Activated naive CD4-positive, alpha-beta T cell treated with anti-CD3 and anti-CD28 coated beads for 36 hours (primary cell): ENCODE measurements at regions of chrX and their contacts with region 1.

Region 1: DNA sequence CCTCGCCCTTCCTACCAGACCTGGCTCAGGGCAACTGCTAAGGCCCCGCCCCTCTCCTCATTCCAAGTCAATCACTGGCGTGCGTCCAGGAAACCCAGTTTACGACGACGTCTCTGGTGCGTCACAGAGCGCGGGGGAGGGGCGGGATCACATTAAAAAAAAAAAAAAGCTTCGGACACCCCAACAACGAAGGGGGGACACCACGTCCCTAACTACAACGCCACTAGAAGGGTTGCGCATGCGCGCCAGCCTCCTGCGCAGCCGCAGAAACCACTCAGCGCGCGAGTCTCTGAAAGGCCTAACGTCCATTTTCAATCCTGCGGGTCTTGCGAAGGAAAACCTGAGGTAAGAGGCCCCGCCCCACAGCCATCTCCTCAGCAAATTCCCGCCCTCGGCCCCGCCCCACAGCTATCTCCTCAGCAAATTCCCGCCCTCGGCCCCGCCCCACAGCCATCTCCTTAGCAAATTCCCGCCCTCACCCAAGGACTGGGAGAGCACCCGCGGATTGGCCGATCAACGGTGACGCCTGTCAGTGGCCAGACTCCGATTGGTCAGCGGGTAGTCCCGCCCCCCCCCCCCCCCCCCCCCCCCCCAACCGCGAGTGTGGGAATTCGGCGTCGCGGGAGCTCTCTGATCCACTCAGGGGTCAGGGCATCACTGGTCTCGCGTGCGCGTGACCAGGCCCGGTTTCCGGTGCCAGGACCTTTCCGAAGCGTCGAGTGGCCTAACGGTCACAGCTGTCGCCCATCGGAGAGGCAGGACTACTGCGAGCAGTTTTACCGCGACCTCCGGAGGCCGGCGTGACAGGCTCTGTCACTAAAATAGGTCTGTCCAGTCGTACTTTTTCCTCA is at the start of gene SCML1:
- DNase-seq: peak; percentile 95
- H3K4me3 Mint-ChIP-seq: peak within 1 kb of the TSS; percentile 84
- H3K27ac Mint-ChIP-seq: peak within 1 kb of the TSS; percentile 88
- H3K4me1 Mint-ChIP-seq: peaks cover 26% of the 10 kb centered on the region
- H3K27me3 Mint-ChIP-seq: no peaks in the 10 kb centered on the region
- total RNA-seq, gene SCML1: 11.4 to 11.8 TPM

Region 2: GRCh38 chrX:16484350-16484749 is 1252.7 kb before region 1 on chrX:
- CTCF ChIA-PET with region 1: no interaction called
- intact Hi-C with region 1: loop called (anchors 5 kb)
- DNase-seq: peak; percentile 66
- H3K4me3 Mint-ChIP-seq: no peak overlapping the region
- H3K27ac Mint-ChIP-seq: no peak overlapping the region
- H3K4me1 Mint-ChIP-seq: peaks cover 34% of the 10 kb centered on the region
- H3K27me3 Mint-ChIP-seq: no peaks in the 10 kb centered on the region

Region 3: GRCh38 chrX:17374619-17375366 is 362.3 kb before region 1 on chrX and contains the start of gene NHS:
- CTCF ChIA-PET with region 1: no interaction called
- intact Hi-C with region 1: loop called (anchors 1 kb)
- DNase-seq: peak; percentile 40
- H3K4me3 Mint-ChIP-seq: peak within 1 kb of the TSS; percentile 24
- H3K27ac Mint-ChIP-seq: no peak within 1 kb of the TSS
- H3K4me1 Mint-ChIP-seq: peaks cover 11% of the 10 kb centered on the region
- H3K27me3 Mint-ChIP-seq: peaks cover 21% of the 10 kb centered on the region
- total RNA-seq, gene NHS: 7.8 to 8.9 TPM

Region 4: DNA sequence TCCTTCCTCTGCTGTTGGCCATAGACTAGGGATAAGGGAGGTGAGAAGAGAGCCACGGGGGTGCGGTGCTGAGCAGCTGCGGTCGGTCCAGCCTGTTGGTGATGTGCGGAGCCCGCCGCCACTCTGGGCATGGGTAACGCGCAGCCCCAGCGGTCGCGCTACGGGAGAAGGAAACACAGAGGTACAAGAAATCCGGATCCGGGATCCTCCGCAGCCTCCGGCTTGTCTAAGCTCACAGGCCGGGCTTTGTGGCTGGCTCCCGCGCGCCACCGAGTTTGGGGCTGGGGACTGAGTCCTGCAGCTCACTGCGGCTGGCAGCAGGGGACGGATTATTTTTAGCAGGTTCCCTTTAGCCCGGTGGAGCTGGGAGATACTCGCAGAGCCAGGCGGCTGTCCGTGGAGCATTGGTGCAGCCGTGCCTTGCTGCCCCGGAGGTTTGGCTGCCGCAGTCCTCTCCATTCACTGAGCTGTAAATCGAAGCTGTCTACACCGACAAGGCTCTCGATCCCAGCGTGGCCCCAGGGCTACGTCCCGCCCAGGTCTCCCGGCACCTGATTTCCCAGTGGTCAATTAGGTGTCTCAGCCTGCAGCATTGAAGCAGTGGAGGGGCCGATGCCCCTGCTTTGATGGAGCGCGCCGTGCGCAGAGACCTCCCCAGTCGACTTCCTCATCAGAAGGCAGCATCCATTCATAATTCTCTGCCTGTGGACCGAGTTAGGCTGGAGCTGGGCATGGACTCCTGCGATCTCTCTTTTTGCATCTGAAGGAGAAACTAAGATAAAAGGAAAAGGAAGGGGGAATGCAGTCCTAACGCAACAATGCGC is 81.7 kb before region 1 on chrX:
- CTCF ChIA-PET with region 1: no interaction called
- intact Hi-C with region 1: loop called (anchors 2 kb)
- DNase-seq: peak; percentile 26
- H3K4me3 Mint-ChIP-seq: peak overlapping the region; percentile 88
- H3K27ac Mint-ChIP-seq: peak overlapping the region; percentile 91
- H3K4me1 Mint-ChIP-seq: peaks cover 21% of the 10 kb centered on the region
- H3K27me3 Mint-ChIP-seq: no peaks in the 10 kb centered on the region

Region 5: GRCh38 chrX:17710871-17711301 is 26.2 kb before region 1 on chrX:
- CTCF ChIA-PET with region 1: no interaction called
- intact Hi-C with region 1: no loop called
- DNase-seq: no peak
- H3K4me3 Mint-ChIP-seq: no peak overlapping the region
- H3K27ac Mint-ChIP-seq: no peak overlapping the region
- H3K4me1 Mint-ChIP-seq: peaks cover 3% of the 10 kb centered on the region
- H3K27me3 Mint-ChIP-seq: no peaks in the 10 kb centered on the region

Region 6: DNA sequence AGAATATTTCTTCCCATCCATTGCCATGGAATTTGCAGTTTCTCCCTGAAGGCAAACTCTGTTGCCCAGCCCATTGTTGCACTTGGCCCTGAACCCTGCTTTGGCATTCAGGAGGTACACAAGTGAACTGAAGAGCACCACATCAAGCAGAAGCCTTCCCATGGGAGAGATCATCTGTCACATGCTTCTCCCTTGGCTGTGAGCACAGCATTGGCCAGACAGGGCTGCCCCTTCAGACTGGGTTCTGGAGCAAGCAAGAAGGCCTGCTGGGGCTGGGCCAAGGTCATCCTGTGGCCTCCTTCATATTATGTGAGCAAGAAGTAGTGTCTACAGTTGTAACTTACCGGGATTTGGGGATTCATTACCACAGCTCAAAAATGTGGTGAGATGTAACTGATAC is 22.9 kb after region 1 on chrX:
- CTCF ChIA-PET with region 1: no interaction called
- intact Hi-C with region 1: no loop called
- DNase-seq: no peak
- H3K4me3 Mint-ChIP-seq: no peak overlapping the region
- H3K27ac Mint-ChIP-seq: no peak overlapping the region
- H3K4me1 Mint-ChIP-seq: peaks cover 10% of the 10 kb centered on the region
- H3K27me3 Mint-ChIP-seq: no peaks in the 10 kb centered on the region

Region 7: DNA sequence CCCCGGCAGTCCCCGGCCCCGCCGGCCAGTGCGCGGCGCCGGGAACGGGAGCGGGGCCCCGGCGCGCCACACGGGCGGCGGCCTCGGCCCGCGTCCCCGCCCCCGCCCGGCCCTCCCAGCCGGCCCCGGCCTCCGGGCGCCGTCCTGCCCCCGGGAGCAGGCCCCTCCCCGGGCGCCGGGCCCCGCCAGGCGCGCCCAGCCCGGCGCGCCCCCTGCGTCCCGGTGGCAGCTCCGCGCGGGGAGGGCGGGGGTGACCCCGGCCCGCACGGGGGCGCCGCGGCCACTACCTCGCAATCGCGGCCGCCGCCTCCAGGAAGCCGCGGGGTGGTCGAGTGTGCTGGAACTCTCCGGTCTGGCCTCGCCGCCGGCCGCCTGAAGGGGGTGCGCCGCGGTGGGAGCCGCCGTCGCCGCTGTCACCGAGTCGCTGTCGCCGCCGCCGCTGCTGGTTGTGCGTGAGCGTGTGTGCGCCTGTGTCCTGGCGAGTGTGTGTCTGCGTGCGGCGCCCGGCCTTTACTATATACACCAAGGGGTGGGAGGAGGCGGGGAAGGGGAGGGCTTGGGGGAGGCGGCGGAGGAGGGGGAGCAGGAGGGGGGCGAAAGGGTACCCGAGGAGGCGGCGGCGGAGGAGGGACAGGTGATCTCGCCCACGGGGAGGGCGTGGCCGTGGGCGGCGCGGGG is 123.9 kb after region 1 on chrX and contains the start of gene RAI2:
- CTCF ChIA-PET with region 1: no interaction called
- intact Hi-C with region 1: loop called (anchors 2 kb)
- DNase-seq: peak; percentile 28
- H3K4me3 Mint-ChIP-seq: peak within 1 kb of the TSS; percentile 76
- H3K27ac Mint-ChIP-seq: no peak within 1 kb of the TSS
- H3K4me1 Mint-ChIP-seq: peaks cover 8% of the 10 kb centered on the region
- H3K27me3 Mint-ChIP-seq: peaks cover 22% of the 10 kb centered on the region
- total RNA-seq, gene RAI2: 0.50 to 0.59 TPM

Region 8: GRCh38 chrX:18674788-18675735 is 938.0 kb after region 1 on chrX:
- CTCF ChIA-PET with region 1: no interaction called
- intact Hi-C with region 1: loop called (anchors 10 kb)
- DNase-seq: peak; percentile 72
- H3K4me3 Mint-ChIP-seq: peak overlapping the region; percentile 67
- H3K27ac Mint-ChIP-seq: peak overlapping the region; percentile 75
- H3K4me1 Mint-ChIP-seq: peaks cover 8% of the 10 kb centered on the region
- H3K27me3 Mint-ChIP-seq: no peaks in the 10 kb centered on the region